ENCODE measurements at regions of chr13 and their contacts with region 1.

Region 1: DNA sequence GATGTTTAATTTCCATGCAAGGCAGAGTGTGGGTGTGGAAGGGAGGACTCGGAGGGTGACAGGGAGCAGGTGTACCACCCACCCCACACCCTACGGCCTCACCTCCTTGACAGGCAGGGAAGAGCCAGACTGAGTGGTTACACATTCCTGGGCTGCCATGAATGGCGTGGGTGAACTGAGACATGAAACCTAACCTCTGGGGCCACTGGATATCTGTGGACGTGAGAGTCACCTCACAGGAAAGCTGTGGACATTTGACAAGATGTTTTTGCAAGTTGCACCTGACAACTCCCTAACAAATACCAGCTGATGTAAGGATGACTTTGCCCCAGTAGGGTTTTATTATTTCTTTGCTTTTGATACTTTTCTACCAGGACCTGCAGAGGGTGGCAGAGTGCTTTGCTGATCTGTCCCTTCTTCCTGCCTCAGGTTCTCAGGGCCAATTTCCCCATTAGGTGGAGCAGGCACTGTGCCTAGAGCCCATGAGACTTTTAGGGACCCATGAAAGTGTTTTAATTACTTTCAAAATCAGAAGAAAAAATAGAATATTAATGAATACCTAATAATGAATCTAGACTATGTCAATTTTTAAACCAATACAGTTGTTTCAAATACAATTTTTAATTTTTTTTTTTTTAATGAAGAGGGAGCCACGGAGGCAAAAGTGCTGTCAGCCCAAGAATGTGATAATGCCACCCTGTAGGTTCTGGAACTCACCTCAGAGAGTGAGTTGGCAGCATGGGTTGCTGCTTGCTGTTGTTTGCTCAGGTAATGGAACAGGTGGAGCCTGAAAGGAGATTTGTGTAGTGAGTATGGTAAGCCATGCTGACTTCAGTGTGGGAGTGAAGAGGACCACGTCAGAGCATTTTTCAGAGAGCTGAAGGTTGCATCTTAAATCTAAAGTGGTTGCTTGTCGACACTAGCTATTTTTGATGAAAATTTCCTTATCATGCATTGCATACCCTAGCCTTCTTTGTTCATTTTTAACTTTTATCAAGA is 58.0 kb upstream of the CYSLTR2 start:
- DNase-seq: peak in 1 of 2 donors; percentile 79
- ATAC-seq: peak; percentile 83 to 92 (median 90)
- H3K4me3 ChIP-seq: no peak overlapping the region
- H3K27ac ChIP-seq: peak overlapping the region in 2 of 10 donors; percentile 1 to 48
- H3K4me1 ChIP-seq: peaks cover 0 to 12% (median 1%) of the 10 kb centered on the region in 9 donors
- H3K27me3 ChIP-seq: no peaks in the 10 kb centered on the region
- CTCF ChIP-seq: peak; percentile 29 to 82 (median 73)

Region 2: GRCh38 chr13:47484548-47484947 is 1111.2 kb before region 1 on chr13:
- intact Hi-C with region 1: no loop called
- DNase-seq: no peak
- ATAC-seq: no peak
- H3K4me3 ChIP-seq: no peak overlapping the region
- H3K27ac ChIP-seq: no peak overlapping the region
- H3K4me1 ChIP-seq: peaks cover 0 to 6% (median 0%) of the 10 kb centered on the region in 9 donors
- H3K27me3 ChIP-seq: no peaks in the 10 kb centered on the region
- CTCF ChIP-seq: no peak

Region 3: GRCh38 chr13:48500652-48501197 is 95.0 kb before region 1 on chr13:
- intact Hi-C with region 1: no loop called
- DNase-seq: no peak
- ATAC-seq: peak in 7 of 8 donors; percentile 22 to 72 (median 47)
- H3K4me3 ChIP-seq: no peak overlapping the region
- H3K27ac ChIP-seq: peak overlapping the region in 5 of 10 donors; percentile 15 to 81 (median 40)
- H3K4me1 ChIP-seq: peaks cover 0 to 60% (median 10%) of the 10 kb centered on the region in 9 donors
- H3K27me3 ChIP-seq: no peaks in the 10 kb centered on the region
- CTCF ChIP-seq: no peak

Region 4: GRCh38 chr13:48542581-48543341 is 53.0 kb before region 1 on chr13:
- intact Hi-C with region 1: no loop called
- DNase-seq: peak; percentile 47 to 70
- ATAC-seq: peak; percentile 82 to 93 (median 90)
- H3K4me3 ChIP-seq: peak overlapping the region in 6 of 10 donors; percentile 12 to 34 (median 24)
- H3K27ac ChIP-seq: peak overlapping the region; percentile 65 to 86 (median 81)
- H3K4me1 ChIP-seq: peaks cover 14 to 26% (median 22%) of the 10 kb centered on the region in 9 donors
- H3K27me3 ChIP-seq: no peaks in the 10 kb centered on the region
- CTCF ChIP-seq: peak in 6 of 9 donors; percentile 17 to 42 (median 28)

Region 5: DNA sequence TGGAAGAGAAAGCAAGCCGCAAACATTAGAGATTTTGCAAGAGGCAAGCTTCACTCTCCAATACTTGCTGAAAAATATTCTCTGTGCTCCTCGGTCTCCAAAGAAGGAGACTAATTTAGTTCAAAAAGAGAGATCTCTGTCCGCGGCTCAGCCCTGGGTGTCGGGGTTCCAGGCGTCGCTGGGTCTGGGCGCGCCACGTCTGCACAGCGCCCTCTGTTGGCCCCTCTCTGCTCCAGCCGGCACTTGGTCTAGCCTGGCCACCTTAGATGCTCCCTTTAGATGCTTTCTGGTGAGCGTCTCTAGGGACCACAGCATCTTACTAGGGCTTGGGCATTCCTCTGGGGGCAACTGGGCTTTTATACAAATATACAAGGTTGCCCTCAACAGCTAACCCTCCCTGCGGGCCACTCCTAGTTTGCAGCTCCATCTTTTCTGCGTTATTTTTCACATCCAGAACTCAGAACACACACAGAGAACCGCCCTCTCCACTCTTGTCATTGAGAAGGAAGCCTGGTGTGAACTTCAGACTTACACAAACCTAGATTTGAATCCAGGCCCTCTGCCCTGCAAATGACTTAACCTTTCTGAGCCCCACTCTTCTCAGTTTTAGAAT is 136.3 kb after region 1 on chr13:
- intact Hi-C with region 1: loop called in 1 of 10 experiments (anchors 10 kb)
- DNase-seq: peak in 1 of 2 donors; percentile 46
- ATAC-seq: peak in 5 of 8 donors; percentile 35 to 75 (median 53)
- H3K4me3 ChIP-seq: peak overlapping the region in 3 of 10 donors; percentile 13 to 28 (median 22)
- H3K27ac ChIP-seq: peak overlapping the region in 1 of 10 donors; percentile 28
- H3K4me1 ChIP-seq: peaks cover 0 to 17% (median 0%) of the 10 kb centered on the region in 9 donors
- H3K27me3 ChIP-seq: no peaks in the 10 kb centered on the region
- CTCF ChIP-seq: peak in 8 of 9 donors; percentile 22 to 78 (median 62)

Region 6: DNA sequence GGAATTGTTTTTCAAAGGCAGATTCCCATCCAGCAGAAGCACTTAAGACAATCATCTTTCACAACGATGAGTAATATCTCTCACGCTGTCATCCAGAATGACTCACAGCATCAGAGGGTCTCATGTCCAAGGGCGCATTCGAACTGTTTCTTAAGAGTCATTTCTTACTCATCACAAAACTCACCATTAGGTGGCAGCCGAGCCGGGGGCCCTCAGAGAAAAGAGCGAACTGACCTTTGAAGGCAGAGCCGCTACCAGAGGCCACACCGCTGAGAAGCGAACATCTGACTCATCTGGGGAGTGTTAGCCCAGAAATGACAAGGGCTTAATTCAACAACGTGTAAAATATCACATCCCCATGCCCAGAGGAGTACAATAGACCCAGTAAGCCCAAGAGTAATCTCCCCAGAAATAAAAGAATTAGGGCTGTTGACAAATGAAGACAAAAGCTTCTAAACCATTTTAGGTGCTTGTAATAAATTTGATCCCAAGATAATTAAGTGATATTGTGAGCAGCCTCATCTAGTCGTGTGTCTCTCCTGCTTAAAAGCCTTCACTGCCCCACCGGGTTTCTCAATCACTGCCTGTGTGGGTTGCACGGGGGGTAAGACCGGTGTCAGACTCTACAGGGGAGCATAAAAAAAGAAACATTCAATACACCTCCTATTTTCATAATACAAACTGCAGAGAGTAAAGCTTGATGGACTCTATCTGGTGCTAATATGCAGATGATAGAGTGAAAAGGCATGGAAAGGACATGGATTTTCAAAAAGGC is 154.2 kb after region 1 on chr13:
- intact Hi-C with region 1: loop called in 1 of 10 experiments (anchors 5 kb)
- DNase-seq: peak; percentile 72 to 79
- ATAC-seq: peak; percentile 67 to 92 (median 85)
- H3K4me3 ChIP-seq: no peak overlapping the region
- H3K27ac ChIP-seq: peak overlapping the region; percentile 37 to 87 (median 82)
- H3K4me1 ChIP-seq: peaks cover 4 to 36% (median 29%) of the 10 kb centered on the region in 9 donors
- H3K27me3 ChIP-seq: no peaks in the 10 kb centered on the region
- CTCF ChIP-seq: peak; percentile 11 to 69 (median 53)

Region 7: DNA sequence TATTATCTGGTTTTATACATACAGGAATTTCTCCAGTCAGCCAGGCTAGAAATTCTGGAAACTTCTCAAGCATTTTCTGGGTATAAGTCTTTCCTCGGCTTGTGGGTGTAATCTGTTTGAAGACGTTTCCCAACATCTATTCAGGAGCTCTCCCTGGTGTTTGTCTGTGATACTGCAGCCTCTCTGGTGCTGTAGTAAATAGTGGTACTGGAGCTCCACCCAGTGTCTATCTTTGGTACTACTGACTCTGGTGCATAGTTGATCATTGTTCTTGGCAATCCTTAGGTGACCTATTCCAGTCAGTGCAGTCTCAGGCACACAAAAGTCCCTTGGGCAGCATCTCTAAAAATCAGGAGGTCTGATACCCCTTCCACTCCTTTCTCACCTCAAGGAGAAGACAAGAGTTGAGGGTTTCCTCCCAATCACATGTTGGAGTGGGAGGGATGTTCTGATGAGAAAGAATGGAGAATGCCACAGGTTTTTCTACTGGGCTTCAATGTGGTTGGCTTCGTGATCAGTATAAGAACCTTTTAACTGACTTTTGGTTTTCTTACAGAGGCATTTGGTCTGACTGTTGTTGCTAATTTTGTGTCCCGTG is 173.5 kb after region 1 on chr13:
- intact Hi-C with region 1: loop called (anchors 1 to 5 kb)
- DNase-seq: peak in 1 of 2 donors; percentile 92
- ATAC-seq: peak; percentile 83 to 94 (median 91)
- H3K4me3 ChIP-seq: no peak overlapping the region
- H3K27ac ChIP-seq: peak overlapping the region in 1 of 10 donors; percentile 29
- H3K4me1 ChIP-seq: peaks cover 0 to 9% (median 0%) of the 10 kb centered on the region in 9 donors
- H3K27me3 ChIP-seq: no peaks in the 10 kb centered on the region
- CTCF ChIP-seq: peak; percentile 96 to 100 (median 99)

Region 8: DNA sequence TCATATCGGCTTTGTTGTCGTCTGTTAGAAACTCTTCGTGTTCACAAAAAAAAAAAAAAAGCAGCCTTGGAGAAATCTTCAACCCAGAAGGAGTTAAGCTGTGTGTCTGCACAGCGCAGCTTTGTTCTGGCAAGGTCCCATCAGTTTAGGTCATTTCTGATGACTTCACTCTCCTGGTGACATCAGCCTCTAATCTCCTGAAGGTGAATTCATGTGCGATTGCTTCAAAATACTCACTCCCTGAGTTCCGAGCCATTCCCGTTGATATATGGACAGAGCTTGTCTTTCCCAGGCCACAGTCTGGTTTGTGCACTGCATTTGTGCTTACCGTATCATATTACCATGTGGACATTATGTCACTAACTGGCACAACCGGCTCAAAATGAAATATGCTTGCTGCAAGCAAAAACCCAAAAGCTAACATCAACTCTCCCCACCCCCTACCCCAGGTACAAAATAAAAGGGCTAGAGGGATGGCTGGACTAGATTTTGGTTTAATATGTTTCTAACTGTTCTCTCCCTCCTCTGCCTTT is 1761.9 kb after region 1 on chr13:
- intact Hi-C with region 1: loop called in 1 of 10 experiments (anchors 5 kb)
- DNase-seq: peak in 1 of 2 donors; percentile 54
- ATAC-seq: peak; percentile 67 to 90 (median 78)
- H3K4me3 ChIP-seq: no peak overlapping the region
- H3K27ac ChIP-seq: peak overlapping the region in 7 of 10 donors; percentile 21 to 61 (median 44)
- H3K4me1 ChIP-seq: peaks cover 0 to 36% (median 20%) of the 10 kb centered on the region in 9 donors
- H3K27me3 ChIP-seq: no peaks in the 10 kb centered on the region
- CTCF ChIP-seq: no peak